Left cardiac atrium (tissue), 4 donors: ENCODE measurements at regions of chr3 and their contacts with region 1.

Region 1: DNA sequence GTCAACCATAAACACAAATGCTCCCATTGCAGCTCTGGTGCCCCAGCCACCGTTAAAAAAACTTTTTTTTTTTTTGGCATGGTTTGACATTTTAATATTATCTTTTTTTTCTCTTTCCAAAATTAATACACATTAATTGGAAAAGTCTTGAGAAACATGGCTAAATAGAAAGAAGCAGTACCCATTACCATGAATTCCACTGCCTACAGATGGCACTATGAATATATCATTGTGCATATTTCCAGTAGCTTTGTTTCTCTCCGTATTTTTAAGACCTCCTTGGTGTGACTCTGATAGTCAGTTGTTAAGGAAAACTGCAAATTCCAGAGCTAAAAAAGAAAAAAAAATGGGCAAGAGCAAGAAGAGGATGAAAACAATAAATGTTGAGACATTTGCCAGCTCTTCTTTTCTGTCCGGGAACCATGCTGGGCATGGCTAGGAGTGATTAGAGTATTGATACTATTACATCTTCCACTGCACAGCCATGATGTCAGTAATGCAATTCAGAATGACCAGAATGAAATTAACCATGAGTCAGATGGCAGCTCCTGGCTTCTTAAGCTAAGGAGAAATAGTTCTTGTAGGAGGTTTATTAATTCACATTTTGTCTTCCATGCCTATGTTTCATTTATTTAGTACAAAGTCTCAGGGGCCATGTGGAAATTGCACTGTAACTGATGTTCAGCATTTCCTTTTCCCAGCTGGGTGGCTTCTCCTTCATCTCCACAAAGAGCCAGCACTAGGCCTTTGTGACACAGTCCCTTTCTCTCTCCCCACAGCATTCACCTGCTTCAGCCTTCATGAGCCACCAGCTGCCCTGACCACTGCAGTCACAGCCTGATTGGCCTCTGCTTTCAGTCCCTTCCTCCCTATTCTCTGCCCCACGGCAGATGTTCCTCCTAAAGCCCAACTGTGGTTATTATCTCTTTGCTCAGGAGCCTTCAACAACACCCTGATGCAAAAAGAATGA is 31.8 kb downstream of the SLC7A14 start:
- DNase-seq: no peak
- ATAC-seq: no peak

Region 2: DNA sequence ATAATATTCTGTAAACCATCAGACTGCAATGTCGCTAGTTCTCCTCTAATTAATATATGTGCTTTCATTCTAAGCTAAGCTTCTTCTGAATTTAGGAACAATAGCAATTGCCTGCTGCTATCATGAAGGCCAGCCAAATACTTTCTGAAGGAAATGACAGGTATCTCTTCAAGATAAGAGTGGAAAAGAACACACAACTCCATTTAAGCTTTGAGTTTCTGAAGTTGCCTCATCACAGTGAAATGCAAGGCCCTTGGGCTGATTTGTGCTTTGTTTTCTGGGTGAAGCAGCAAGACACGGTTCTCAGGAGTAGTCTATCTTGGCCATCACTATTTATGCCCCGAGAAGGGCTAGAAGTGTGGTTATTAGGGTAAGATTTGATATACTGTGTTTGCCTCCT is 25.6 kb after region 1 on chr3:
- intact Hi-C with region 1: loop called in 1 of 2 experiments (anchors 2 kb)
- DNase-seq: no peak
- ATAC-seq: no peak

Region 3: DNA sequence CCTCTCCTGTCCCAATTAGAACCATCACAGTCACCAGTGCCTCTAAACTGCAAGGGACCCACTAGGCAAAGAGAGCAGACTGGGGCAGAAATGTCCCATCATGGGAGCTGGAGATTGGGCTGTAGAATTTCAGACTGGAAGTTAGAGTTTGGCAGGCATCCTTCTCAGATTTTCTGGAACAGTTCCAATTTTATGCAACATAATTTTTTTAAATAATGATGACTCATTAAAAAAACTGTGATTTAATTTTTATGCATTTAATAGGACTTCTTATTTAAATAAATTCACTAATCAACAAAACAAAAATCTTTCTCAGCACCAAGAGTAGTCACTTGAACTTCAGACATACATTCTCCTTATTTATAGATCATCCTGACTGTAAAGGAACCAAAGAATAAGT is 116.4 kb after region 1 on chr3:
- intact Hi-C with region 1: no loop called
- DNase-seq: no peak
- ATAC-seq: no peak

Region 4: DNA sequence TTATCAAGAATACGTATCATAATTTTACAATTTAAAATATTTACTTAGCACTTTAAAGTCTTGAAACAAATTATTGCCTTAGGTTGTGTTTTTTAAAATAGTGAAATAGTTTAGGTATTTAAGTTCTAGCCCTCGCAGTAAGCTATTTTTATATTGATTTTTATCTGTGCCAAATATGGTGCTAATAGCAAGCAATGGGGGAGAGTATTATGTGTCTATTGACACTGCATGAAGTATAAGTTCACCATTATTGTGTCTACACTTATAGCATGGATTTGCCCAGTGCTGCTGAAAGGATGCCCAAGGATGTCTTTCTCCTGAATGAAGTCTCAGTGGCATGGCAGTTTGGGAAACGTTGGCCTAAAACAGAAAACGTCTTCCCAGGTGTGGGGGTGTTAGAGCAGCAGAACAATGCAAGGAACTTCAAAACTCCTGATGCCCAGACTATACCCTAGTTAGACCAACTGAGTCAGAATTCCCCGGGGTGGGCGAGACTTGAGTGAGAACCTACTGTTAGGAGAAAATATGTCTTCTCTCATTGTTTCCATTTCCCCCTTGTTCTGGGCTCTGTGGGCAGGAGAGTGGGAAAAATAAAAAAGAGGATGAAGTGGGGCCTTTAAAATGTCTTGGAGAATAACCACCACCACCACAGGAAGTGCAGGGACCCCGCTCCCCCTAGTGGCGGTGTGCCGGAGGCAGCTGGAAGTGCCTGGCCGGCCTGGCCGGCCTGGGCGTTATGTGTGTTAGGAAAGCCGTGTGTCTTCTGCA is 136.0 kb after region 1 on chr3:
- intact Hi-C with region 1: loop called (anchors 5 to 10 kb)
- DNase-seq: peak; percentile 68
- ATAC-seq: peak in 1 of 2 donors; percentile 71